ENCODE measurements at regions of chr3 and their contacts with region 1.

Region 1: GRCh38 chr3:46266598-46266997 is 24.3 kb downstream of the CCR3 start:
- DNase-seq: no peak
- H3K4me3 ChIP-seq: no peak overlapping the region
- H3K27ac ChIP-seq: no peak overlapping the region
- H3K4me1 ChIP-seq: no peaks in the 10 kb centered on the region
- H3K27me3 ChIP-seq: peaks cover 3% of the 10 kb centered on the region
- CTCF ChIP-seq: no peak

Region 2: DNA sequence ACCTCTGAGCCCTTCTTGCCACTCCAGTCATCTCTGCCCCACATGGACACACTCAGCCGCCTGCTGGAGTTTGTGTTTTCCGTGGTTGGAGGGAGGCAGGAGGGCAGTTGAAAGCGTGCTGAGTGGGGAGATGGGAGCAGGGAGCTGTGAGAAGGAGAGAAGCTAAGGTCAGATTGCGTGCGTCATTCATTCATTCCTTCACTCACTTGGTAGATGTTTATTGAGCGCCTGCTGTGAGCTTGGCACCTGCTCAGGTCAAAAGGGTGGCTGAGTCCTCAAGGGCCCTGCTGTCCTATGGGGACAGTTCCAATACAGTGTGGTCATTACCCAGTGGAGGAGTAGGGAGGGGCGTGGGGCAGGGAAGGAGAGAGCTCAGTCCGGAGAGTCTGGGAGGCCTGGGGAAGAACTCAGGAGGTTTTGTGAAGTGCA is 648.5 kb before region 1 on chr3:
- CTCF ChIA-PET with region 1: no interaction called
- dilution Hi-C with region 1: no loop called
- in situ Hi-C with region 1: no loop called
- intact Hi-C with region 1: no loop called
- DNase-seq: no peak
- H3K4me3 ChIP-seq: no peak overlapping the region
- H3K27ac ChIP-seq: no peak overlapping the region
- H3K4me1 ChIP-seq: peaks cover 2% of the 10 kb centered on the region
- H3K27me3 ChIP-seq: no peaks in the 10 kb centered on the region
- CTCF ChIP-seq: no peak

Region 3: DNA sequence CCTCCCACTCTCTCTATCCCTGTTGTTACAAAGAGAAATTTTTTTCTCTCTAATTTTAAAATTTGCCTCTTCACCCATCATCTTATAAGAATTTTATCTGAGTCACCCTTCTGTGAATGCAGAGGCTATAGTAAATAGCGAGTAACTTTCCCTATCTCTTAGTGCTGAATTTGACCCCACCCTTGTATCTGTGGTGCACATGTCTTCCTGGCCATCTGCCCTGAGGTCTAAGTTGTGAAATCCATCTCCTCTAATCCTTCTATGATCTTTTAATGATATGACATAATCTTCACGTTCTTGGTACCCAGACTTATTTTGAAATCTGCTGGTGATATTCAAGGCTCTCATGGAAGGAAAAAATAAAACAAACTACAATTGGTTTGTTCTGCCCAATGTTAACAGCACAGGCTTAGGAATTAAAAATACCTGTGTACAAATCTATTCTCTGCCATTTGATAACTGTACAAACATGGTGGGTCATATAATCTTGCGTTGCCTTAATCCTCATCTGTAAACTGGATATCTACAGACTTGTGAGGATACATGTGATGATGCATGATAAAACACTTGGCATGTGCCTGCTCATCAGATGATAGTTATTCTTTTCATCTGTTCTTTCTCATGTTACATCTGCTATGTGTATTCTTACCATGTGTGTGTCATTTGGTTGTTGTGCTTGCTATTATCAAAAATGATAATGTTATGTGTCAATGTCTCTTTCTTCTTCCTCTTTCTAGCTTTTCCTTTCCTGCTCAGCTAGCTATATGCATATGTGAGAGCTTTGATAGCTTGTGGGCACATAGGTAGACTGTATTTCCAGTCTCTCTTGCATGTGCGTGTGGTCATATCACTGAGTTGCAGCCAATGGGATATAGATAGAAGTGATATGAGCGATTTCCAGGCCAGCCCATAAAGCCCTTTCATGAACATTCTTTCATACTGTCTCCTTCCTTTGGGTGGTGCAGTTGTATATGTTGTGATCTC is 38.0 kb before region 1 on chr3:
- CTCF ChIA-PET with region 1: no interaction called
- dilution Hi-C with region 1: loop called (anchors 5 kb)
- in situ Hi-C with region 1: no loop called
- intact Hi-C with region 1: no loop called
- DNase-seq: peak; percentile 82
- H3K4me3 ChIP-seq: no peak overlapping the region
- H3K27ac ChIP-seq: no peak overlapping the region
- H3K4me1 ChIP-seq: peaks cover 5% of the 10 kb centered on the region
- H3K27me3 ChIP-seq: peaks cover 5% of the 10 kb centered on the region
- CTCF ChIP-seq: no peak

Region 4: GRCh38 chr3:46449755-46450552 is 183.4 kb after region 1 on chr3:
- CTCF ChIA-PET with region 1: no interaction called
- dilution Hi-C with region 1: no loop called
- in situ Hi-C with region 1: no loop called
- intact Hi-C with region 1: no loop called
- DNase-seq: no peak
- H3K4me3 ChIP-seq: no peak overlapping the region
- H3K27ac ChIP-seq: no peak overlapping the region
- H3K4me1 ChIP-seq: no peaks in the 10 kb centered on the region
- H3K27me3 ChIP-seq: peaks cover 4% of the 10 kb centered on the region
- CTCF ChIP-seq: peak; percentile 64 to 67